HEK293 (cell line): ENCODE measurements at regions of chr15 and their contacts with region 1.

Region 1: DNA sequence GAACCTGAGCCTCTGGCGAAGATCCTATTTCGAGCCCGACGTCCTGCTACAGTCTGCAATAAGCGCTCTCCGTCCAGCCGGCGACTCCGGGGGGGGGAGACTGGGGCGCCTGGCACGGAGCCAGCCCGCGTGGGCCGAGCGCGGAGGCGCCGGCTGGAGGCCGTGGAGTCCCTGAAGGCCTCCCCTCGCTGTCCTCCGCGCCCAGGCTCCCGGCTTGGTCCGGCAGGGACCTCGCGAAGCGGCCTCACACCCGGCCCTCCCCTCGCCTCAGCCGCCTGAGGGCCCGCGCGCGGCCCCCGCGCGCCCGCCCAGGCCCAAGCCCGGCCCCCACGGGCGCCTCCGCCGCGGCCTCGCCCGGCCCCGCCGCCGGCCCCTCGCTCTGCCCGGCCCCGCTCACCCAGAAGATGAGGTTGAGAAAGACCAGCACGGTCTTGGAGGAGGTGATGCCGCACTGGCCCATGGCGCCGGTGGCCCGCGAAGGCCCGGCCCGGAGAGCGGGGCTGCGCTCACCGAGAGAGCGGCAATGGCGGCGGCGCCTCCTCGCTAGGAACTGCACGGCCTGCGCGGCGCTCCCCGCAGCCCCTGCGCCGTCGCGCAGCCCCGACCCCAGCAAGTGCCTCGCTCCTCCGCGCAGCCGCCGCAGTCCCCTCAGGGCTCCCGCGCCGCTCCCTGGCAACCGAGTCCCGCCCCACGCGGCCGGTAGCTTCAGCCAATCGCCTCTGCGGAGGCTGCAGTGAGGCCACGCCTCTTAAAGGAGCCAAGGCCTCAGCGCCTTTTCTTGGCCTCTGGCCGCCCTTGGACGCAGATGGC is at the start of gene TSPAN3:
- H3K4me3 ChIP-seq: peak within 1 kb of the TSS; percentile 92
- H3K27ac ChIP-seq: peak within 1 kb of the TSS; percentile 97
- H3K4me1 ChIP-seq: peaks cover 25% of the 10 kb centered on the region
- CTCF ChIP-seq: no peak

Region 2: GRCh38 chr15:77059786-77060361 is 10.8 kb before region 1 on chr15:
- CTCF ChIA-PET with region 1: interaction called, 3 read pairs
- POLR2A ChIA-PET with region 1: interaction called, 13 read pairs
- H3K4me3 ChIP-seq: no peak overlapping the region
- H3K27ac ChIP-seq: no peak overlapping the region
- H3K4me1 ChIP-seq: peaks cover 53% of the 10 kb centered on the region
- CTCF ChIP-seq: no peak

Region 3: GRCh38 chr15:77083381-77084162 is 12.9 kb after region 1 on chr15:
- CTCF ChIA-PET with region 1: no interaction called
- POLR2A ChIA-PET with region 1: interaction called, 12 read pairs
- H3K4me3 ChIP-seq: peak overlapping the region; percentile 25
- H3K27ac ChIP-seq: 0 out of 2 replicates have a peak overlapping the region, but pooled peaks have one; percentile 34
- H3K4me1 ChIP-seq: peaks cover 8% of the 10 kb centered on the region
- CTCF ChIP-seq: no peak

Region 4: GRCh38 chr15:77243135-77243534 is 172.4 kb after region 1 on chr15:
- CTCF ChIA-PET with region 1: no interaction called
- POLR2A ChIA-PET with region 1: no interaction called
- H3K4me3 ChIP-seq: no peak overlapping the region
- H3K27ac ChIP-seq: no peak overlapping the region
- H3K4me1 ChIP-seq: peaks cover 3% of the 10 kb centered on the region; the same call in 1 of the 2 replicates
- CTCF ChIP-seq: no peak

Region 5: DNA sequence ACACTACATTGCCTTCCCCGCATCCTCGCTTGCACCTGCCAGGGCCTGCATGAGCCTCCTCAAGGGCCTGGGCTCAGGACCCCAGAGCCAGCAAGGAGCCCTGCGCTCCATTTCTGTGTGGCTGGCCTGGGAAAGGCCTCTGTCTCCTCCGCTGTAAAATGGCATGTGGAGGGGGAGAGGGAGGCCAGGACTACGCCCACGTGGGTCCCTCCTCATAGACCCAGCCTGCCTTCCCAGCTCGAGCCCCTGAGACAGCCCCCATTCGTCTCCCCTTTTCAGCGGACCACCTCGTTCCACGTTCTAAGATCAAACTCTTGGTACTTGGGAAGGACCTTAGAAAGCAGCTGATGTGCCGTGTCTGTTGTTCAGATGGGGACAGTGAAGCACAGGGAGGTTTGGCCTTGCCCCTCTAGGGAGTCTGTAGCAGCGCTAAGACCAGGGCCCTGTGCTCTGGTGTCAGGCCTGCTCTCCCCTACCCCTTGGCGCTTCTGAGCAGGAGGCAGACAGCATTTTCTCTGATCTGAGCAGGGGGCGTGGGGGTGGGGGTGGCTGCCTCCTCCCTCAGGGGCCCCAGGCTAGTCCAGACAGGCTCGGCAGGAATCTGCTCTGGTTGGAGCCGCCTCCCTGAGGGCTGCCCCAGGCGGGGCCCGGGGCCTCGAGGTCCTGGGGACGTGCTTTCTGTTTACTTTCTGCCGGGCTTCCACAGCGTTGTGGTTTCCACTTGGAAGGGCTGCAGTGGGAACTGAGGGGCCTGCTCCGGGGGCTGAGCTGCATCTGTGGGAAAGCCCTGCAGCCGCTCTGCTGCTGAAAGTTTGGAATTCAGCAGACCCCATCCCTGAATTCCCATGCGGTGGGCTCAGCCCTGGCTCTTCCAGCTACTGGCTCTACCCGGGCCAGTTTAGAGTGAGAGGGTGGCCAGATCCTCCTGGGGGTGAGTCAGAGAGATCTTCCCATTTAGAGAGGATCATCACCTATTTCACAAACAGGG is 456.4 kb after region 1 on chr15:
- CTCF ChIA-PET with region 1: no interaction called
- POLR2A ChIA-PET with region 1: no interaction called
- H3K4me3 ChIP-seq: no peak overlapping the region
- H3K27ac ChIP-seq: peak overlapping the region; percentile 35
- H3K4me1 ChIP-seq: peaks cover 10% of the 10 kb centered on the region
- CTCF ChIP-seq: no peak